ENCODE measurements at regions of chr21 and their contacts with region 1.

Region 1: DNA sequence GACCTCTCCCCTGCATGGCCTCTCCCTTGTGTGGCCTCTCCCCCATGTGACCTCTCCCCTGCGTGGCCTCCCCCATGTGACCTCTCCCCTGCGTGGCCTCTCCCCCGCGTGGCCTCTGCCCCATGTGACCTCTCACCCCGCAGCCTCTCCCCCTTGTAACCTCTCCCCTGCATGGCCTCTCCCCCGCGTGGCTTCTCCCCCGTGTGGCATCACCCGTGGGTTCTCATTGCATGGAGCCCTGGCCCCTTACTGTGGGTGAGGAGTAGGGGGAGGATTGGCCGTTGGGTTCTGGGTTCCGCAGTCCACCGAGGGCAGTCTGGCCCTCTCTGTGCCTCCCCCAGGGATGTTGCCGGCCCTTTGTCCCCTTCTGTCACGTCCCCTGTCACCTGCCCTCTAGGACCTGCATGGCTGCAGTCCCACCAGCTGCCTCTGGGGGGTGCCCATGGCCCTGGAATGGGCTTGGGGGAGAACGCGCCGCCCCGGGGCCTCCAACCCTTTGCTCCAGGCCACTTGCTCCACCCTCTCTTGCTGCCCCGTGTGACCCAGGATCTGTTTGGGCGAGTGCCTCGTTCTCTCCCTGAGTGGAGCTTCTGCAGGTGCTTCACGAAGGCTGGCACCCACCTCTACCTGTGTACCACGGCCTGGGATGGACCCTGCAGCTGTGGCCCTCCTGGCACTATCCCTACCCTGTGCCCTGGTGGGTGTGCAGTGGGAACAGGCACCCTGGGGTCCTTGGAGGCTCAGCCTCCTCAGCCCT is 21.3 kb downstream of the RRP1 start:
- DNase-seq: peak; percentile 84
- H3K4me3 Mint-ChIP-seq: no peak overlapping the region
- H3K27ac Mint-ChIP-seq: peak overlapping the region; percentile 48
- H3K4me1 Mint-ChIP-seq: no peaks in the 10 kb centered on the region
- H3K27me3 Mint-ChIP-seq: peaks cover 1% of the 10 kb centered on the region

Region 2: DNA sequence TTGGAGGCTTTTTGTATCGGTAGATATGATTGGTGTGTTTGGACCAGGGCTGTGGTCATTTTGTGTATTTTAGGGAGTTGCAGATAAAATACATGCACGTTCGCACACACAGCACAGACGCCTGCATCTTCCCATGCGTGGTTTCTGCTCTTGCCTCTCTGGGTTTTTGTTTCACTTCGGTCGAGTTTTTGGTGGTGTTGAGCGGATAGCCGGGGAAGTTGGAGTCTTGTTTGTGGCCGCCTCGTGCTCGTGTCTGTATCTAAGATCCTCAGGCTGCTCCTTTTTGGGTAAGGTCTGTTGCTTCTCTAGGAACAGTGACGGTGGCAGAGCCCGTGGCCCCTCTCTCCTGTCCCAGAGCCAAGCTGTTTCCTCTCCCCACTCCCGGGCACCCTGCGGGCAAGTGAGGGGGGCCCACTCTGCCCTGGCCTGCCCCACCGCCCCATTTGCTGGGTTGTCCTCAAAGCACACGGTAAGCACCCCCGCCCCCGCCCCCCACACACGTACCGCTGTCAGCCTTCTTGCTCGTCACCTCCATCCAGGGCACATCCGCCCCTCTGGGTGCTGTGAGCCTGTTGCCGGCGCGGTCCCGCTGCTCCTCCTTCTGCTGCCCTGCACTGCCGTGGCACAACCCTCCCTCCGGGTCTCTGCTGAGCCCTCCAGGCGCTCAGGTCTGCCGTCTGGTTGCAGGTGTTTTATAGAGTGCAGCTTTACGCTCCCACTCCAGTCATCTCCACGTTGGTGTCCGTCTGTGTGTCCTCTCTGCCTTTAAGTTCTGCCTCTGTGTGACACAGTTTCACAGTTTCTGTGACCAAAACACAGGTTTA is 106.2 kb after region 1 on chr21:
- intact Hi-C with region 1: loop called (anchors 1 kb)
- DNase-seq: peak; percentile 53
- H3K4me3 Mint-ChIP-seq: peak overlapping the region; percentile 81
- H3K27ac Mint-ChIP-seq: peak overlapping the region; percentile 81
- H3K4me1 Mint-ChIP-seq: peaks cover 66% of the 10 kb centered on the region
- H3K27me3 Mint-ChIP-seq: no peaks in the 10 kb centered on the region

Region 3: DNA sequence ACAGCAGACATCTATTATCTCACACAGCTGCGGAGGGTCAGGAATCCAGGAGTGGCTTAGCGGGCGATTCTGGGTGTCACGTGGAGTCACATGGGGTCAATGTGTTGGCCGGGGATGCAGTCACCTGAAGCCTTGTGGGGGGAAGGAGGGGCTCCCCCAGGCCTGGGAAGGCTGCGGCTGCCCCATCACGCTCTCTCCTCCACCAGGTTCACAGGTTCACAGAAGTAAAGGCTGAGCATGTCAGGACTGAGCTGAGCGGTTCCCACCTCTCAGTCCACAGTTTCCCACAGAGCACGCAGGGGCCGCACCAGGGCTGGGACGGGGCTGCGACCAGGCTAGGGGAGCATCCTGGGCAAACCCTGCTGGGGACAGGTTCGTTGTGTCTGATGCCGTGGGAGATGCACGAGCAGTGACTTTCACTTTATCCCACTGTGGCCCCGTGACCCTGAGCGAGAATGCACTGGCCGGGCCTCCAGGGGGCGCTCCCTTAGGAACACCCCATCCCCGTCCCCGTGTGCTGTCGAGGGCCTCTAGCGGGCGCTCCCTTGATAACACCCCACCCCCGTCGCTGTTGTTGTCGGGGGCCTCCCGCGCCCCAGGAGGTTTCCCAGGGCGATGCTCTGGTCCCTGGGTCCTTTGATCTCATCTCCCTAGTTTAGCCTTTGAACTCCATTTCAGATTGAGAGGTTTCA is 128.2 kb after region 1 on chr21:
- intact Hi-C with region 1: loop called (anchors 1 kb)
- DNase-seq: peak; percentile 82
- H3K4me3 Mint-ChIP-seq: peak overlapping the region; percentile 76
- H3K27ac Mint-ChIP-seq: peak overlapping the region; percentile 61
- H3K4me1 Mint-ChIP-seq: peaks cover 20% of the 10 kb centered on the region
- H3K27me3 Mint-ChIP-seq: no peaks in the 10 kb centered on the region

Region 4: GRCh38 chr21:43975495-43975993 is 164.9 kb after region 1 on chr21:
- intact Hi-C with region 1: loop called (anchors 1 kb)
- DNase-seq: peak; percentile 77
- H3K4me3 Mint-ChIP-seq: no peak overlapping the region
- H3K27ac Mint-ChIP-seq: peak overlapping the region; percentile 48
- H3K4me1 Mint-ChIP-seq: peaks cover 10% of the 10 kb centered on the region
- H3K27me3 Mint-ChIP-seq: no peaks in the 10 kb centered on the region